ENCODE measurements at regions of chr1 and their contacts with region 1.

Region 1: DNA sequence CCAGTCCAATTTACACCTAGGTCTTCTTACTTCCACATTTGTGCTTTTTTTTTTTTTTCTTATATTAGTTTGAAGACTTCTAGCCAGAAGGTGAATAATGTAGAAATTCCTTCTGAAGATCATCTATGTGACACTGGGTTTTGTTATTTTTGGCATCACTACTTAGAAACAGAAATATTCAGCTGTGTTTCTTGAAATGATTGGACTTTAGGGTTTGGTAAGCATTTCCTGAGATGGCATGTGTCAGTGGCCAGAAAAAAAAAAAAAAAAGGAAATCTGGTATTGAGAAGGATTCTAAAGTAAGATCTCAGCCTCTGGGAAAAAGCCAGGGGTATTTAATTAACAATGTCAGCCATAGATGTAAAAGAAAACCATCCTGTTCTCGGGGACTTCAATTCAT is 43.4 kb upstream of the LRRC8C start:
- DNase-seq: no peak
- H3K4me3 Mint-ChIP-seq: peak overlapping the region; percentile 11
- H3K27ac Mint-ChIP-seq: peak overlapping the region; percentile 74
- H3K4me1 Mint-ChIP-seq: peaks cover 89% of the 10 kb centered on the region
- H3K27me3 Mint-ChIP-seq: no peaks in the 10 kb centered on the region

Region 2: DNA sequence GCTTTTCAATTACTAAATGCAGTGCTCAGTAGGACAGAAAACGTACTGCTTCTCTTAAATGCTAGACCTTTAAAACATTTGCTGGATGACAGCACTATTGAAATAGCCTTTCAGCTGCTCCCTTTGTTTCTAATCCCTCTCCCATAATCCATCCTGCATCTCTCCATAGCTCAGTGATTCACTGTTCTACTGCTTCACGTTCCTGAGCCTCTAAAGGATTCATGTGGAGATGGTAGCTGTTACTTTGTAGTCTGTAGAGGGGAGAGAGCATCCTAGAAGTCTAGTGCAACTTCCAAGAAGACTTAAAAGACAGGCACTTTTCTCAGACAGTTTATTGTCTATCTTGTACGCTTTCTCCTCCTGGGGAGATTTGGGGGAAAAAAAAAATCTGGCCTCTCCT is 13.5 kb before region 1 on chr1:
- intact Hi-C with region 1: loop called (anchors 2 kb)
- DNase-seq: no peak
- H3K4me3 Mint-ChIP-seq: no peak overlapping the region
- H3K27ac Mint-ChIP-seq: no peak overlapping the region
- H3K4me1 Mint-ChIP-seq: peaks cover 53% of the 10 kb centered on the region
- H3K27me3 Mint-ChIP-seq: no peaks in the 10 kb centered on the region